BJ (cell line): ENCODE measurements at regions of chr21 and their contacts with region 1.

Region 1: GRCh38 chr21:44792702-44793591 is 8.7 kb downstream of the UBE2G2 start:
- DNase-seq: no peak
- H3K4me3 ChIP-seq: no peak overlapping the region
- H3K27me3 ChIP-seq: no peaks in the 10 kb centered on the region
- CTCF ChIP-seq: peak; percentile 75

Region 2: DNA sequence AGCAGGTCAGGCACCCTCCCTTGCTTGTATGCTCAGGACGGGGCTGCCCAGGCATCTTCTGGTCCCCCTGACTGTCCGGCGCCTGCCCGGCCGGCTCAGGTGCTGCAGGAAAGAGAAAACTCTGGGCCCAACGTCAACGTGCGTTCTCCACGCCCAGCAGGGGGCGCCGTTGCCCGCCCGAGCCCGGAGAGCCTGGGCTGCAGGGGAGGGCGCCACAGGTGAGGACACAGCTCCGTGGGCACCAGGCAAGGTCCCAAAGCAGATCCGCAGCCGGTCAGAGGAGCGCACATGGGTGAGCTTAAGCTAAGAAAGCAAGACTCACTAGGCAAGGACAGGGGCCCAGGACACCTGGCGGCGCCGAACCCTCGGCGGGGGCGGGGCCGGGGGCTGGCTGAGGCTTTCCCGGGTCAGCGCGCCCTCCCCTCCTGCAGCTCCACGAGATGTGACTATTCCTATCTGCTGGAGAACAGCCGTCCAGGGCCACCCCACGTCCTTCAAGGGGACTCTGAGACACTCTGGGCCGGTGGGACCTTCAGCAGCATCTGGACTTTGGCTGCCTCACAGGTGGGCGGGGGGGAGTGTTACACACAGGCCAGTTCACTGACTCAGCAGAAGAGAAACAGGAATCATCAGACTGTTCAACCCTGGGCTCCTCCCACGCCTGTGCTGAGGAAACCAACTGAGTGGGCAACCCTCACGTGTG is 282.3 kb before region 1 on chr21:
- CTCF ChIA-PET with region 1: interaction called, 18 read pairs
- POLR2A ChIA-PET with region 1: no interaction called
- DNase-seq: no peak
- H3K4me3 ChIP-seq: no peak overlapping the region
- H3K27me3 ChIP-seq: peaks cover 1% of the 10 kb centered on the region
- CTCF ChIP-seq: peak; percentile 76

Region 3: GRCh38 chr21:44755227-44755626 is 37.7 kb before region 1 on chr21:
- CTCF ChIA-PET with region 1: interaction called, 19 read pairs
- POLR2A ChIA-PET with region 1: no interaction called
- DNase-seq: no peak
- H3K4me3 ChIP-seq: no peak overlapping the region
- H3K27me3 ChIP-seq: peaks cover 1% of the 10 kb centered on the region
- CTCF ChIP-seq: peak; percentile 41

Region 4: GRCh38 chr21:44958471-44959191 is 165.7 kb after region 1 on chr21:
- CTCF ChIA-PET with region 1: no interaction called
- POLR2A ChIA-PET with region 1: no interaction called
- DNase-seq: no peak
- H3K4me3 ChIP-seq: no peak overlapping the region
- H3K27me3 ChIP-seq: no peaks in the 10 kb centered on the region
- CTCF ChIP-seq: no peak